ENCODE measurements at regions of chr19 and their contacts with region 1.

Region 1: GRCh38 chr19:18733196-18733647 is 49.7 kb downstream of the CRTC1 start:
- DNase-seq: peak; percentile 18
- ATAC-seq: no peak
- H3K4me3 ChIP-seq: no peak overlapping the region
- H3K27ac ChIP-seq: peak overlapping the region; percentile 13
- H3K4me1 ChIP-seq: peaks cover 67% of the 10 kb centered on the region
- H3K27me3 ChIP-seq: no peaks in the 10 kb centered on the region
- CTCF ChIP-seq: no peak
- EP300 ChIP-seq: no peak
- POLR2A ChIP-seq: no peak
- RAD21 ChIP-seq: no peak

Region 2: GRCh38 chr19:18683213-18683939 is 49.8 kb before region 1 on chr19 and contains the start of gene CRTC1:
- CTCF ChIA-PET with region 1: no interaction called
- POLR2A ChIA-PET with region 1: interaction called, 3 read pairs
- in situ Hi-C with region 1: no loop called
- intact Hi-C with region 1: loop called (anchors 10 kb)
- DNase-seq: peak; percentile 66
- ATAC-seq: peak; percentile 75
- H3K4me3 ChIP-seq: peak within 1 kb of the TSS; percentile 77 to 89 (median 86)
- H3K27ac ChIP-seq: peak within 1 kb of the TSS; percentile 74
- H3K4me1 ChIP-seq: peaks cover 41% of the 10 kb centered on the region
- H3K27me3 ChIP-seq: no peaks in the 10 kb centered on the region; a peak in 1 of 5 replicates
- CTCF ChIP-seq: peak; percentile 43
- EP300 ChIP-seq: no peak
- POLR2A ChIP-seq: peak; percentile 80
- RAD21 ChIP-seq: no peak
- total RNA-seq, gene CRTC1: 1.3 and 2.0 TPM in 2 replicates

Region 3: DNA sequence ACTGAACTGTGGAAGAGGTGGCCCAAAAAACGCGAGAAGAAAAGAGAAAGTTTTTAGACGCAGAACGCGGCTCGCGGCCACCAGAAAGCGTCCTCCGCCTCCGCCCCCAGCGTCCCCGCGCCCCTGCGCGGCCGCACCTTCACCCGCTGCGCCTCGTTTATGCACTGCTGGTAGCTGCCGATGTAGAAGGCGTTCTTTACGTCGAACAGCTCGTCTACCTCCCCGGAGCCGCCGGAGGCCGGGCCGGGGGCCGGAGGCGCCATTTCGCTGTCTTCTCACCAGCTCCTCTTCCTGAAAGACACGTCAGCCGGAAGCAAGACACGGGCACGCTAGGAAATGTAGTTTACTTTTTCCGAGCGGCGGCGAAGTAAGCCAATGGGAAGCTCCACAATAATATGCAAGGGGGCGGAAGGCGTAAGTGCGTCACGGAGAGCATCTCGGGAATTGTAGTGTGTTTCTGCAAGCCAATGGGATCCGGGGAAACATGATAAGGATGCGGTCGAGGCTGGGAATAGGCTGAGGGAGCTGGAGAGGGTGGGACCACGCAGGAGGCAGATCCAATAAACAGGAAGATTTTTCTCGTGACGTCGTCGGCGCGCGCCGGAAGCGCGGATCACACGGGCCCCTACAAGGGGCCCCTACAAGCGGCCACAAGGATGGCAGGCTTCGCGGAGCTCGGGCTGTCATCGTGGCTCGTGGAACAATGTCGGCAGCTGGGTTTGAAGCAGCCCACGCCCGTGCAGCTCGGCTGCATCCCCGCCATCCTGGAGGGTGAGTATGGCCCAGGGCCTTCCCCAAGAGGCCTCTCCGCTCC is 186.1 kb after region 1 on chr19 and contains the starts of genes COPE and DDX49:
- CTCF ChIA-PET with region 1: no interaction called
- POLR2A ChIA-PET with region 1: no interaction called
- in situ Hi-C with region 1: no loop called
- intact Hi-C with region 1: no loop called
- DNase-seq: peak; percentile 100
- ATAC-seq: peak; percentile 95
- H3K4me3 ChIP-seq: peak within 1 kb of the TSS; percentile 79 to 100 (median 97)
- H3K27ac ChIP-seq: peak within 1 kb of the TSS; percentile 85
- H3K4me1 ChIP-seq: peaks cover 35% of the 10 kb centered on the region
- H3K27me3 ChIP-seq: no peaks in the 10 kb centered on the region; a peak in 1 of 5 replicates
- CTCF ChIP-seq: no peak; the same call in 1 of the 2 replicates
- EP300 ChIP-seq: no peak
- POLR2A ChIP-seq: peak; percentile 77 to 96
- RAD21 ChIP-seq: peak; percentile 28; the same call in 1 of the 2 replicates
- total RNA-seq, gene COPE: 188 and 189 TPM in 2 replicates
- total RNA-seq, gene DDX49: 44.6 and 46.2 TPM in 2 replicates

Measured in HepG2 (cell line).